ENCODE measurements at regions of chr10 and their contacts with region 1.

Region 1: DNA sequence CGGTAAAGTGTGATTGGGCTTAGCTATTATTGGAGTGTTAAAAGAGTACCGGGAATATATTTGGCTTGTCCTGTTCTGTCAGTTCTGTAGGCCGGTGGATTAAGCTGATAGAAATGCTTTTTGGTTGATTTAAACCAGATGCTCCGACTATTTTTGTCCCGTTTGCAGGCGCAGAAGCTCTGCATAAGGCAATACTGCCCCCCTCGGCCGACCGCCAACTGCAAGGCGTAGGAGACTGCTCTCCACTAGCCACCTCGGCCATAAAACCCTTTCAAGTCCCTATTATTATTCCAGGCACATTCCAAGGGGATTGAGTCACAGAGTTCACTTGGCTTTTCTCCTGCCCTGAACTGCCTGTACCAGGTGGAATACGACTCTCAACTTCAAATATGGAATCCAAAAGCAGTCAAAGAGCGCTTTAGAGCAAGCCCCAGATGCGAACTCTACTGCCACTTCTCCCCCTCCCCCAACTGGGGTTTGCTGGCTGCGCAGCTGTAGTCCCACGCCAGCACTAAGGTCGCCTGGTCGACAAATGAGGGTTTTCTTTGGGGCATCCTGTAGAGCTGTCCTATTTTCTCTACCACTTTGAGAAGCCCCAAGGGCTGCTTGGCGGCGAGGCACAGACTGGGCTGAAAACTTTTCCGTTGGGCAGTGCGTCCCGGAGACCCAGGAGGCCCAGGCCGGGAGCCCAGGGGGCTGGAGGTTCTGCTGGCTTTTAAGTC is 108.3 kb downstream of the REEP3 start:
- DNase-seq: peak; percentile 61 to 87 (median 75)
- ATAC-seq: peak; percentile 62
- H3K4me3 ChIP-seq: peak overlapping the region; percentile 77
- H3K4me3 Mint-ChIP-seq: peak overlapping the region; percentile 95
- H3K27ac ChIP-seq: peak overlapping the region; percentile 28 to 43
- H3K27ac Mint-ChIP-seq: peak overlapping the region; percentile 77
- H3K4me1 ChIP-seq: peaks cover 23% of the 10 kb centered on the region
- H3K4me1 Mint-ChIP-seq: peaks cover 23% of the 10 kb centered on the region
- H3K27me3 ChIP-seq: no peaks in the 10 kb centered on the region
- H3K27me3 Mint-ChIP-seq: no peaks in the 10 kb centered on the region
- CTCF ChIP-seq: peak; percentile 97

Region 2: GRCh38 chr10:63166742-63167258 is 462.7 kb before region 1 on chr10:
- CTCF ChIA-PET with region 1: interaction called, 41 read pairs
- POLR2A ChIA-PET with region 1: interaction called, 23 read pairs
- intact Hi-C with region 1: loop called (anchors 1 to 2 kb)
- DNase-seq: peak in 4 of 14 experiments; percentile 30 to 80 (median 72)
- ATAC-seq: peak; percentile 82
- H3K4me3 ChIP-seq: no peak overlapping the region
- H3K4me3 Mint-ChIP-seq: no peak overlapping the region
- H3K27ac ChIP-seq: no peak overlapping the region
- H3K27ac Mint-ChIP-seq: peak overlapping the region; percentile 69
- H3K4me1 ChIP-seq: no peaks in the 10 kb centered on the region
- H3K4me1 Mint-ChIP-seq: peaks cover 6% of the 10 kb centered on the region
- H3K27me3 ChIP-seq: no peaks in the 10 kb centered on the region
- H3K27me3 Mint-ChIP-seq: no peaks in the 10 kb centered on the region
- CTCF ChIP-seq: peak; percentile 88

Region 3: GRCh38 chr10:63217120-63217605 is 412.4 kb before region 1 on chr10:
- CTCF ChIA-PET with region 1: interaction called, 22 read pairs
- POLR2A ChIA-PET with region 1: interaction called, 18 read pairs
- intact Hi-C with region 1: loop called (anchors 1 kb)
- DNase-seq: peak in 4 of 14 experiments; percentile 32 to 75 (median 74)
- ATAC-seq: peak; percentile 92
- H3K4me3 ChIP-seq: no peak overlapping the region
- H3K4me3 Mint-ChIP-seq: no peak overlapping the region
- H3K27ac ChIP-seq: no peak overlapping the region
- H3K27ac Mint-ChIP-seq: peak overlapping the region; percentile 40
- H3K4me1 ChIP-seq: peaks cover 6% of the 10 kb centered on the region
- H3K4me1 Mint-ChIP-seq: peaks cover 59% of the 10 kb centered on the region
- H3K27me3 ChIP-seq: no peaks in the 10 kb centered on the region
- H3K27me3 Mint-ChIP-seq: no peaks in the 10 kb centered on the region
- CTCF ChIP-seq: peak; percentile 89

Region 4: GRCh38 chr10:63465293-63466143 is 164.0 kb before region 1 on chr10 and contains the start of gene JMJD1C:
- CTCF ChIA-PET with region 1: interaction called, 7 read pairs
- POLR2A ChIA-PET with region 1: interaction called, 10 read pairs
- intact Hi-C with region 1: loop called (anchors 5 to 10 kb)
- DNase-seq: peak; percentile 37 to 81 (median 52)
- ATAC-seq: peak; percentile 64
- H3K4me3 ChIP-seq: peak within 1 kb of the TSS; percentile 91
- H3K4me3 Mint-ChIP-seq: peak within 1 kb of the TSS; percentile 97
- H3K27ac ChIP-seq: peak within 1 kb of the TSS; percentile 49 to 57
- H3K27ac Mint-ChIP-seq: peak within 1 kb of the TSS; percentile 85
- H3K4me1 ChIP-seq: peaks cover 6% of the 10 kb centered on the region
- H3K4me1 Mint-ChIP-seq: peaks cover 67% of the 10 kb centered on the region
- H3K27me3 ChIP-seq: no peaks in the 10 kb centered on the region
- H3K27me3 Mint-ChIP-seq: no peaks in the 10 kb centered on the region
- CTCF ChIP-seq: no peak
- total RNA-seq, gene JMJD1C: 389 to 399 TPM

Region 5: DNA sequence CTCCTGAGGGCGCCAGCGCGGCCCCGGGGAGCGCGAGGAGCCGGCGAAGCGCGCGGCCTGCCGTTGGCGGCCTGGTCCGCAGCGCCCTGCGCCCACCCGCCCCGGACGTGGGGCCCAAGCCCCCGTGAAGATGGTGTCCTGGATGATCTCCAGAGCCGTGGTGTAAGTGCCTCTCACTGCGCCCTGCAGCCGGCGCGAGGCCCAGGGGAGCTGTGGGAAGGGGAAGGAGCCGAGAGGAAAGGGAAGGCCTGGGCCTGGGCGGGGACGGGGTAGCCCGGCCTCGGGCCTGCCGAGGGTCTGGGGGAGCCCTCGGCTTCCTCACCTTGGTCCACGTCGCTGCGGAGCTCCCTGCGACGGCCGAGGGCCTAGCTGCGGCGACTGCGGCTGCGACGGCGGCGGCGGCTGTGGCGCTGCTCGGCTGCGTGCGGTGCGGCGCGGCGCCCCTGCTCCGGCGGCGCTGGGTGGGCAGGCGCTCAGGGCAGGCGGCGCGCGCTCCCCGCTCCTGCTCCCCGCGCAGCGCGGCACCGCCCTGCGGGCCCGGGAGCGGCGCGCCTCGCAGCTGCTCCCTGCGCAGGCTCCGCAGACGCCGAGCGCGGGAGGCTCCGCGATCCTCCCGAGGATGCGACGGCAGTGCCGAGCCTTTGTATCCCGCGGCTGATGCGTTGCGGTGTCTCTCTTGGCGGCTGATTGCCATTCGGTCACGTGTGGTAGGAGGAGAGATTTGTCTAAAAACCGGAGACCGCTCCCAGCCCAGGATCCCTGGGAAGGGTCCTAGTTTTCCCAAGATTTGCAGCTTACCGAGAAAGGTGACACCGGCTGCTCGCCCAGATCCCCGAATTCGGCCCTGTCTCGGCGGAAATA is 107.9 kb before region 1 on chr10:
- CTCF ChIA-PET with region 1: interaction called, 3 read pairs
- POLR2A ChIA-PET with region 1: interaction called, 38 read pairs
- intact Hi-C with region 1: loop called (anchors 5 kb)
- DNase-seq: peak; percentile 18 to 87 (median 40)
- ATAC-seq: peak; percentile 71
- H3K4me3 ChIP-seq: peak overlapping the region; percentile 87
- H3K4me3 Mint-ChIP-seq: peak overlapping the region; percentile 87
- H3K27ac ChIP-seq: peak overlapping the region; percentile 68 to 81
- H3K27ac Mint-ChIP-seq: peak overlapping the region; percentile 86
- H3K4me1 ChIP-seq: peaks cover 20% of the 10 kb centered on the region
- H3K4me1 Mint-ChIP-seq: peaks cover 71% of the 10 kb centered on the region
- H3K27me3 ChIP-seq: no peaks in the 10 kb centered on the region
- H3K27me3 Mint-ChIP-seq: no peaks in the 10 kb centered on the region
- CTCF ChIP-seq: no peak

Region 6: DNA sequence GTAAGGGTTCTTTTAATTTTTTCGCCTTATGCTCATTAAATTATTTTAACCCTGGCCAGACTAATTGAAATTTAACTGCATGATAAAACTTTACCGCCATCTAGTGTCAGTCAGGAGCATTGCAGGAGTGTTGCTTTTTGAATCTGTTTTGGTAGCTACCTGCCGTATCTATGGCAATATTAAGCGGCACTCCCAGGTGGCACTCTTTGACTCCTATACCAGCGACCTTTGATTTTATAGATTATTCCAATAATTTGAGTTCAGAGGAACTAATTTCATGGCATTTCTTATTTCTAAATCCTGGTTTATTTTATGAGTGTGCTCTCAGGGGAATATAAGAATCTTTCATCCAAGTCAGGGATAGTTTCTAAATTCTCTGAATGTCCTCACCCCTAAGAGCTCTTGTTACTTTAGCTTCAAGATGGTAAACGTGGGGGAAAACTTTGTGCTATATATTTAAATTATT is 90.6 kb after region 1 on chr10:
- CTCF ChIA-PET with region 1: interaction called, 19 read pairs
- POLR2A ChIA-PET with region 1: interaction called, 4 read pairs
- intact Hi-C with region 1: loop called (anchors 1 to 5 kb)
- DNase-seq: peak in 13 of 14 experiments; percentile 9 to 79 (median 33)
- ATAC-seq: peak; percentile 88
- H3K4me3 ChIP-seq: no peak overlapping the region
- H3K4me3 Mint-ChIP-seq: no peak overlapping the region
- H3K27ac ChIP-seq: no peak overlapping the region
- H3K27ac Mint-ChIP-seq: peak overlapping the region; percentile 19
- H3K4me1 ChIP-seq: peaks cover 4% of the 10 kb centered on the region
- H3K4me1 Mint-ChIP-seq: peaks cover 10% of the 10 kb centered on the region
- H3K27me3 ChIP-seq: peaks cover 0 to 10% of the 10 kb centered on the region in 2 experiments
- H3K27me3 Mint-ChIP-seq: peaks cover 4% of the 10 kb centered on the region
- CTCF ChIP-seq: peak; percentile 99

Region 7: GRCh38 chr10:64115913-64116643 is 486.6 kb after region 1 on chr10:
- CTCF ChIA-PET with region 1: no interaction called
- POLR2A ChIA-PET with region 1: no interaction called
- intact Hi-C with region 1: no loop called
- DNase-seq: no peak
- ATAC-seq: no peak
- H3K4me3 ChIP-seq: no peak overlapping the region
- H3K4me3 Mint-ChIP-seq: no peak overlapping the region
- H3K27ac ChIP-seq: no peak overlapping the region
- H3K27ac Mint-ChIP-seq: no peak overlapping the region
- H3K4me1 ChIP-seq: no peaks in the 10 kb centered on the region
- H3K4me1 Mint-ChIP-seq: peaks cover 7% of the 10 kb centered on the region
- H3K27me3 ChIP-seq: no peaks in the 10 kb centered on the region
- H3K27me3 Mint-ChIP-seq: peaks cover 4% of the 10 kb centered on the region
- CTCF ChIP-seq: no peak

Measured in CD4-positive, alpha-beta T cell (primary cell).